Psoas muscle (tissue), 8 donors: ENCODE measurements at regions of chr17 and their contacts with region 1.

Region 1: DNA sequence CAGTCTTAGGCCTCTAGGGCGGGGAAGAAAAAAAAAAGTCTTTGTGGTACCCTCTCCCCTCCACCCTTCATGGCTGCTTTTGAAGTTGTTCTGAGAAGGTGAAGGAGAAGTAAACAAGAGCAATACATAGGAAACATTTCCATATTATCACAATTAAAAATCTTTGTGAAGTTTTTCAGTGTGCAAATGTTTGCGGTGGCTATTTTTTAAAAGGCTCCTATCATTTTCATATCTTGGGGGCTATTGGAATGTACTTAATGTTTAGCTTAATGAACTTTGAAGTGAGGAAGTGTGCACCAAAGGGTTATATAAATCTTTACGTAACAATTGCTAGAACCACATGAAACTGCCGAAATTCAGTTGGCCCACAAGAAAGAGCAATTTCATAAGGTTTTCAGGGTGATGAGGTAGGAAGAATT is 7.6 kb downstream of the NOL11 start:
- DNase-seq: no peak
- ATAC-seq: no peak
- H3K4me3 ChIP-seq: no peak overlapping the region
- H3K27ac ChIP-seq: no peak overlapping the region
- H3K4me1 ChIP-seq: no peaks in the 10 kb centered on the region
- H3K27me3 ChIP-seq: no peaks in the 10 kb centered on the region
- CTCF ChIP-seq: no peak

Region 2: DNA sequence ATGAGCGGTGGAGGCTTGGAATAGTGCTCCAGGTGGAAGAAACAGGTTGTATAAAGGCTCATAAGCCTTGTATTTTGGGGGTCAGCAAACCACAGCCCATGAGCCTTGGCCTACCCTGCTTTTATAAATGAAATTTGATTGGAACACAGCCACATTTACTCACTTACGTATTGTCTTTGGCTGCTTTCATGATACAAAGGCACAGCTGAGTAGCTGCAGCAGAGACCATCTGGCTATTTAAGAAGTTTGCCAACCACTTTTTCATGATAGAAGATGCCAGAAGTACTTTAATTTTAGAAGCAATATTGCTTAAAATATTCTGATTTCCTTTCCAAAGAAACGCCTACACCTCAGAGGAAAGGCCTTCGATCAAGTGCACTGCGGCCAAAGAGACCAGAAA is 197.1 kb after region 1 on chr17:
- intact Hi-C with region 1: loop called in 1 of 2 experiments (anchors 10 kb)
- DNase-seq: no peak
- ATAC-seq: peak in 1 of 4 donors; percentile 35
- H3K4me3 ChIP-seq: no peak overlapping the region
- H3K27ac ChIP-seq: no peak overlapping the region
- H3K4me1 ChIP-seq: no peaks in the 10 kb centered on the region
- H3K27me3 ChIP-seq: no peaks in the 10 kb centered on the region
- CTCF ChIP-seq: no peak